Heart right ventricle (tissue), 16 donors: ENCODE measurements at regions of chr1 and their contacts with region 1.

Region 1: GRCh38 chr1:226912587-226913176 is 27.4 kb upstream of the COQ8A start:
- DNase-seq: peak; percentile 60 to 66
- ATAC-seq: peak; percentile 69 to 88 (median 83)
- H3K4me3 ChIP-seq: no peak overlapping the region
- H3K27ac ChIP-seq: peak overlapping the region in 1 of 10 donors; percentile 49
- H3K4me1 ChIP-seq: peaks cover 0 to 15% (median 6%) of the 10 kb centered on the region in 9 donors
- H3K27me3 ChIP-seq: no peaks in the 10 kb centered on the region
- CTCF ChIP-seq: peak; percentile 59 to 82 (median 67)

Region 2: GRCh38 chr1:226951286-226952117 is 38.8 kb after region 1 on chr1:
- intact Hi-C with region 1: loop called in 1 of 10 experiments (anchors 5 kb)
- DNase-seq: no peak
- ATAC-seq: no peak
- H3K4me3 ChIP-seq: no peak overlapping the region
- H3K27ac ChIP-seq: peak overlapping the region in 5 of 10 donors; percentile 9 to 59 (median 35)
- H3K4me1 ChIP-seq: peaks cover 0 to 61% (median 31%) of the 10 kb centered on the region in 9 donors
- H3K27me3 ChIP-seq: no peaks in the 10 kb centered on the region
- CTCF ChIP-seq: no peak

Region 3: DNA sequence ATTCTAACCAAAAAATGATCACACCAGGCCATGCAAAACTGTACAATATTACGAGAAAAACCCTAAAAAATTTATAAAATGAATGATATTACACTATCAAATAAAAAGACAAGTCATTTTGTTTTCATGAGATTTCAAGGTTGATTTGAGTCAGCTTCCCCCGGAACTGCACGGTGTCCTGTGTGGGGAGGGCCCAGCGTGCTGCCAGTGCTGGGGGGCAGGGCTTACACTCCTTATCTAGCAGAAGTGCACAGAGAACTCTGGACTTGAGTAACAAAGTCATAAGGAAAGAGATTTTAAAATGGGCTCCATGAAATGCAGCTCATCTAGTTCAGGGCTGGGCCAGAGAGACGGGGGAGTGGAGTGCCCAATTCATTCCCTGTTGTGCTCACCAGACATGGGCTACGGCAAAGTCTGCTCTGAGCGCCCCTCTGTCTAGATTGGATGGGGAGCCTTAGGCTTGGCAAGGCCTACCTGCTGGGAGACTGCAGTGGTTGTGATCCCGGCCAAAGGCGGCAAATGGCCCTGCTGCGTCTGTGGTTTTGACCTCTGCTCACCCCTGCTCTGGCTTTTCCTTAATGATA is 77.5 kb after region 1 on chr1:
- intact Hi-C with region 1: loop called in 3 of 10 experiments (anchors 5 to 10 kb)
- DNase-seq: peak in 1 of 2 donors; percentile 33
- ATAC-seq: peak in 6 of 8 donors; percentile 11 to 39 (median 26)
- H3K4me3 ChIP-seq: no peak overlapping the region
- H3K27ac ChIP-seq: peak overlapping the region in 9 of 10 donors; percentile 1 to 75 (median 57)
- H3K4me1 ChIP-seq: peaks cover 8 to 84% (median 51%) of the 10 kb centered on the region in 9 donors
- H3K27me3 ChIP-seq: no peaks in the 10 kb centered on the region
- CTCF ChIP-seq: no peak

Region 4: GRCh38 chr1:227234998-227235405 is 322.3 kb after region 1 on chr1:
- intact Hi-C with region 1: loop called in 2 of 10 experiments (anchors 10 kb)
- DNase-seq: peak in 1 of 2 donors; percentile 27
- ATAC-seq: peak in 7 of 8 donors; percentile 39 to 80 (median 67)
- H3K4me3 ChIP-seq: no peak overlapping the region
- H3K27ac ChIP-seq: no peak overlapping the region
- H3K4me1 ChIP-seq: peaks cover 0 to 42% (median 10%) of the 10 kb centered on the region in 9 donors
- H3K27me3 ChIP-seq: no peaks in the 10 kb centered on the region
- CTCF ChIP-seq: peak in 8 of 9 donors; percentile 26 to 66 (median 50)

Region 5: DNA sequence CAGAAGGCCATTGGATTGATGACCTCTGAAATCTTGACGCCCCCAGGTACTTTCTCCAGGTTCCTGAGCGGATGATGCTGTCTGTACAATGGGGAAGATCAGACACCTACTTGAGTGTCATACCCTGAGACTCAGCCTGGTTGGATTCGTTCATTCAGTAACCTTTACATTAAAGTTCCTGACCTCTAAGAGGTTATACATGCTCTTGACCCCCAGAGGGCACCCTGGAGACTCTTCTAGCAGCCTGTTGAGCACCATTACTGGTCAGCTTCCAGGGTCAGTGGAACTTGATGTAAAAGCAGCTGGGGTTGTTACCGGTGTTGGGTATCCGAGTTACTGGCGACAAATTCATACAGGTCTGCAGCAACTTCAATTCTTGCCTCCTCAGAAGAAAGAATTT is 536.4 kb after region 1 on chr1:
- intact Hi-C with region 1: loop called in 1 of 10 experiments (anchors 5 kb)
- DNase-seq: no peak
- ATAC-seq: peak in 1 of 8 donors; percentile 26
- H3K4me3 ChIP-seq: no peak overlapping the region
- H3K27ac ChIP-seq: no peak overlapping the region
- H3K4me1 ChIP-seq: peaks cover 0 to 16% (median 7%) of the 10 kb centered on the region in 9 donors
- H3K27me3 ChIP-seq: peaks cover 0 to 20% (median 3%) of the 10 kb centered on the region in 7 donors
- CTCF ChIP-seq: peak in 7 of 9 donors; percentile 33 to 56 (median 40)